SK-N-SH (cell line): ENCODE measurements at regions of chr11 and their contacts with region 1.

Region 1: GRCh38 chr11:122863704-122864326 is 18.7 kb upstream of the JHY start:
- DNase-seq: peak; percentile 60
- H3K4me3 ChIP-seq: no peak overlapping the region
- H3K27ac ChIP-seq: no peak overlapping the region; a peak in 1 of 4 replicates
- H3K4me1 ChIP-seq: no peaks in the 10 kb centered on the region
- H3K27me3 ChIP-seq: no peaks in the 10 kb centered on the region
- CTCF ChIP-seq: peak; percentile 99
- EP300 ChIP-seq: no peak
- RAD21 ChIP-seq: peak; percentile 90

Region 2: GRCh38 chr11:122822241-122822640 is 41.6 kb before region 1 on chr11:
- CTCF ChIA-PET with region 1: no interaction called
- POLR2A ChIA-PET with region 1: no interaction called
- DNase-seq: no peak
- H3K4me3 ChIP-seq: no peak overlapping the region
- H3K27ac ChIP-seq: no peak overlapping the region
- H3K4me1 ChIP-seq: no peaks in the 10 kb centered on the region
- H3K27me3 ChIP-seq: no peaks in the 10 kb centered on the region
- CTCF ChIP-seq: no peak
- EP300 ChIP-seq: no peak
- RAD21 ChIP-seq: no peak

Region 3: DNA sequence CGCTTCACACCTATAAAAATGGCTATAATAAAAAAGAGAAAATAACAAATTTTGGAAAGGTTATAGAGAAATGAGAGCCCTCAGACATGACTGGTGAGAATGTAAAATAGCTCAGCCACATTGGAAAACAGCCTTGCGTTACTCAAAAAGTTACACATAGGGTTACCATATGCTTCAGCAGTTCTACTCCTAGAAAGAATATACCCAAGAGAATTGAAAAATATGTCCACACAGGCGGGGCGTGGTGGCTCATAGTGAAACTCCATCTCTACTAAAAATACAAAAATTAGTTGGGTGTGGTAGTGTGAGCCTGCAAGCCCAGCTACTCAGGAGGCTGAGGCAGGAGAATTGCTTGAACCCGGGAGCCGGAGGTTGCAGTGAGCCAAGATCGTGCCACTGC is 11.2 kb after region 1 on chr11:
- CTCF ChIA-PET with region 1: interaction called, 45 read pairs
- POLR2A ChIA-PET with region 1: no interaction called
- DNase-seq: no peak
- H3K4me3 ChIP-seq: no peak overlapping the region
- H3K27ac ChIP-seq: no peak overlapping the region
- H3K4me1 ChIP-seq: peaks cover 2% of the 10 kb centered on the region in 2 experiments; a peak in 2 of 4 replicates
- H3K27me3 ChIP-seq: no peaks in the 10 kb centered on the region
- CTCF ChIP-seq: no peak
- EP300 ChIP-seq: no peak
- RAD21 ChIP-seq: no peak

Region 4: DNA sequence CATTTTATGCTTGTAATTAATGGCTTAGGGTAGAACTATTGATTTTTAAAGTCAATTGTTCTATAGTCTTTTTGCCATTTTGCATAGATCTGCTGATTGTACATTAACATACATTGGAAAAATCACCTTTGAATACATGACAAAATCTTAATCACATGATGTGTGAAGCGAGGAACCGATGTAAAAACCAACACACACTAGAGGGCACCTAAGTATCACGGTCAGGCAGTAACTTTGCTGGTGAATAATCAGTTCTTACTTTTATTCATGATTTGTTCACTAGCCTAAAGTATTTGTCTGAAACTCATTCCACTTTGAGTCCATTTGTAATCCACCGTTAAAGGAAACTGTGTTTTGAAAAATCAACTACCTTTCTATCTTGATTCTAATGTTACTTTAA is 47.0 kb after region 1 on chr11:
- CTCF ChIA-PET with region 1: interaction called, 19 read pairs
- POLR2A ChIA-PET with region 1: no interaction called
- DNase-seq: peak; percentile 30
- H3K4me3 ChIP-seq: no peak overlapping the region
- H3K27ac ChIP-seq: no peak overlapping the region
- H3K4me1 ChIP-seq: no peaks in the 10 kb centered on the region
- H3K27me3 ChIP-seq: no peaks in the 10 kb centered on the region
- CTCF ChIP-seq: peak; percentile 58
- EP300 ChIP-seq: no peak
- RAD21 ChIP-seq: peak; percentile 89

Region 5: DNA sequence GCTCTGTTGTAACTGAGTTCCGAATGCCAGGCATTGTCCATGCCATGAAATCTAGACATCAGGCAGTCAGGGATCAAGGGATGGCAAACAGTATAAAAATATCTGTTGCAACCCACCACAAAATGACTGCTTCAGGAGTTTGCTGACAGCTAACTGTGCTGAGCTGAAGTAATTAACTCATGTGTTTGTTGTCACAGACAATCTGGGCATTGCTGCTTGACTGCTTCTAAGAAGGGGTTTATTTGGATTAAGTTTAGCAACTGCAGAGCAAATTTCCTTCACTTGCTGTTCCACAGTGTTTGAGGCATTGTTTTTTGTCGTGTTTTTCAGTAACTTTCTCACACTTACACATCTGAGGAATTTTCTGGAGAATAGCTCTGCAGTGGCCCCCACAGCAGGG is 87.4 kb after region 1 on chr11:
- CTCF ChIA-PET with region 1: no interaction called
- POLR2A ChIA-PET with region 1: no interaction called
- DNase-seq: no peak
- H3K4me3 ChIP-seq: no peak overlapping the region
- H3K27ac ChIP-seq: no peak overlapping the region
- H3K4me1 ChIP-seq: no peaks in the 10 kb centered on the region
- H3K27me3 ChIP-seq: no peaks in the 10 kb centered on the region
- CTCF ChIP-seq: no peak
- EP300 ChIP-seq: no peak
- RAD21 ChIP-seq: no peak

Region 6: DNA sequence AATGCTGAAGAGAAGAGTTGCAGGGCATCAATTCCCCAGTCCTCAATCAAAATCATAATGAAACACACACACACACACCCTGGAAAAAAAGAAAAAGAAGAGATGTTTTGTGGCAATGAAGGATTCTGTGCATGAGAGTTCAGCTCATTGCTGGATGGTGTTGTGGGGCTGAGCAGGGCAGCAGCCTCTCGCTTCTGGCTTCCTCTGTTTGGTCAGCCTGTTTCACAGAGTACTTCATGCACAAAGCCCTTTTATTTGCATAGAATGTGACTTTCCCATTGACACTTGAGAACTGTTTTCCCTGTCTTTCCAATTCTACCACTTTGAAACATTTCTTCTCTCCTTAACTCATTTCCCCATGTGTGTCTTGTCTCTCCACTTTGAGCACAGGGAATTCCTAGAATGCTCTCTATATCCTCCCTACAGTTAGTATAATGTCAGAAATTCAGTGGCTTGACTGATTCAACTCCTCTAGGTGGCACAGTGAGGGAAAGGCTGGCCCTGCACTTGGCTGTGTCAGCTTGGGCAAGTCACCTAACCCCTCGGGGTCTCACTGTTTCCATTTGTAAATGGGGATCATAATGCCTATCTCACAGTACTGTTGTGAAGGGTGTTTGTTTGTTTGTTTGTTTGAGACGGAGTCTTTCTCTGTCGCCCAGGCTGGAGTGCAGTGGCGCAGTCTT is 143.2 kb after region 1 on chr11:
- CTCF ChIA-PET with region 1: interaction called, 10 read pairs
- POLR2A ChIA-PET with region 1: no interaction called
- DNase-seq: no peak
- H3K4me3 ChIP-seq: no peak overlapping the region
- H3K27ac ChIP-seq: no peak overlapping the region
- H3K4me1 ChIP-seq: no peaks in the 10 kb centered on the region
- H3K27me3 ChIP-seq: no peaks in the 10 kb centered on the region
- CTCF ChIP-seq: no peak
- EP300 ChIP-seq: no peak
- RAD21 ChIP-seq: no peak

Region 7: DNA sequence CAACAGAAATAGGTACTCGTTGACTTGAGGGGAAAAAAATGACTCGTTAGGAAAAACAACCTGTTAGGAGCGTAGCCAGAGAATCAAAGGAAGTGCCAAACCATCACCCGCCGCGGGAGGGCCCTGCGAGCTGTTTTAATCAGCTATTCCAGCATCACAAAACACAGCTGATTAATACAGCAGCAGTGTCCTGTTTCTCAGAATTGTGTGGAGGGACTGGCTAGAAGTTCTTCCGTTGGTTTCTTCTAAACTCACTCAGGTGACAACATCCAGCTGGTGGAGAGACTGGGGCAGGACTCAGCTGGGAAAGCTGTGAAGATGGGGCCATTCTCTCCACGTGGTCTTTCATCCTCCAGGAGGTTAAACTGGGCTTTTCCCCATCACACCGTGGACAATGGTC is 170.1 kb after region 1 on chr11:
- CTCF ChIA-PET with region 1: interaction called, 409 read pairs
- POLR2A ChIA-PET with region 1: no interaction called
- DNase-seq: no peak
- H3K4me3 ChIP-seq: no peak overlapping the region
- H3K27ac ChIP-seq: no peak overlapping the region
- H3K4me1 ChIP-seq: no peaks in the 10 kb centered on the region
- H3K27me3 ChIP-seq: no peaks in the 10 kb centered on the region
- CTCF ChIP-seq: no peak
- EP300 ChIP-seq: no peak
- RAD21 ChIP-seq: no peak

Region 8: GRCh38 chr11:123054301-123055065 is 190.7 kb after region 1 on chr11:
- CTCF ChIA-PET with region 1: interaction called, 64 read pairs
- POLR2A ChIA-PET with region 1: interaction called, 4 read pairs
- DNase-seq: peak; percentile 75
- H3K4me3 ChIP-seq: no peak overlapping the region; a peak in 1 of 4 replicates
- H3K27ac ChIP-seq: peak overlapping the region in 1 of 2 experiments; percentile 99; a peak in 2 of 4 replicates
- H3K4me1 ChIP-seq: peaks cover 9 to 24% of the 10 kb centered on the region in 2 experiments; a peak in 3 of 4 replicates
- H3K27me3 ChIP-seq: no peaks in the 10 kb centered on the region
- CTCF ChIP-seq: peak; percentile 80
- EP300 ChIP-seq: no peak
- RAD21 ChIP-seq: peak; percentile 82